ENCODE measurements at regions of chr7 and their contacts with region 1.

Region 1: DNA sequence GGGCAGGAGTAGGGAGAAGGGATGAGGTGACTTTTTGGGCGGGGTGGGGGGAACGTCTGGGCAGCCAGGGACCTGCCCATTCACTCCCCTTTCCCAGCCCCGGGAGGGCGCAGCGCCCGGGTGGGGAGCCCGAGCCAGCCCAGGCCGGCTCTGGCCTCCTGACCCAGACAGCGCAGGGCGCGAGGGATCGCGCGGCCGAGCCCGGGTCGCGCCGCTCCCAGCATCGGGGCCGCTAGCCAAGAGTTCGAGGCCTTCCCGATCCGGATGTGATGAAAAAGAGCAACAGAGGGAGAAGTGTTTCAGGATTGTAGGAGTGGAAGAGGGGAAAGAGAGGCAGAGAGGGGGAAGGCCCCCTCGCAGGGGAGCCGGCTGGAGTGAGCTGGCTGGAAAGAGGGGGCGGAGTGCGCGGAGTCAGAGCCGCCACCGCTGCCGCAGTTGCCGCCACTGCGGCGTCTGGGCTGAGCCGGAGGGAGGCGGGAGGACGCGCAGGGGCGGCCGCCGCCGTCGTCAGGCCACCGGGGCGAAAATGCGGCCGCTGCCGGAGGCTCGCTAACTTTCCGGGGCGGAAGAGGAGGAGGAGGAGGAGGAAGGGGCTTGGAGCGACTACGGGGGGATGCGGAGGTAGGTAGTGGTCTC is at the start of gene MDFIC:
- H3K4me3 Mint-ChIP-seq: peak within 1 kb of the TSS; percentile 100
- H3K27ac Mint-ChIP-seq: peak within 1 kb of the TSS; percentile 99
- H3K4me1 Mint-ChIP-seq: peaks cover 11% of the 10 kb centered on the region
- H3K27me3 Mint-ChIP-seq: no peaks in the 10 kb centered on the region

Region 2: DNA sequence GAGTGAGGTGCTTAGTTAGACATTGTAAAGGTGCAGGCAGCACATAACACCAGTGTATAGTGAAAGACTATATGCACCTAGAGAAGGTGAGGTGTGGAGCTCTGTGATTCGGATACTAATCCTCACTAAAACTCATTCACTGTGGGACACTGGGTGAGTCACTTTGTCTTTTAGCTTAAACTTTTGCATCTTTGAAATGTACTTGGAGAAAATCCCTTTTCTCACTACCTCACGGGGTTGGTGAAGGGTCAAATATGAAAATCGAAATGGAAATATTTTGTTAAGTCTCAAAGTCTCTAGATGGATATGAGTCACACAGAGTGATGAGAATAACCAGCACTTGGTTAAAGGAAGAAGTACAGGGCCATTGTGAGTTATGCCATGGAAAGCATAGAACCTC is 37.8 kb after region 1 on chr7:
- intact Hi-C with region 1: loop called (anchors 5 kb)
- H3K4me3 Mint-ChIP-seq: no peak overlapping the region
- H3K27ac Mint-ChIP-seq: no peak overlapping the region
- H3K4me1 Mint-ChIP-seq: peaks cover 46% of the 10 kb centered on the region
- H3K27me3 Mint-ChIP-seq: no peaks in the 10 kb centered on the region